ENCODE measurements at regions of chr6 and their contacts with region 1.

Region 1: DNA sequence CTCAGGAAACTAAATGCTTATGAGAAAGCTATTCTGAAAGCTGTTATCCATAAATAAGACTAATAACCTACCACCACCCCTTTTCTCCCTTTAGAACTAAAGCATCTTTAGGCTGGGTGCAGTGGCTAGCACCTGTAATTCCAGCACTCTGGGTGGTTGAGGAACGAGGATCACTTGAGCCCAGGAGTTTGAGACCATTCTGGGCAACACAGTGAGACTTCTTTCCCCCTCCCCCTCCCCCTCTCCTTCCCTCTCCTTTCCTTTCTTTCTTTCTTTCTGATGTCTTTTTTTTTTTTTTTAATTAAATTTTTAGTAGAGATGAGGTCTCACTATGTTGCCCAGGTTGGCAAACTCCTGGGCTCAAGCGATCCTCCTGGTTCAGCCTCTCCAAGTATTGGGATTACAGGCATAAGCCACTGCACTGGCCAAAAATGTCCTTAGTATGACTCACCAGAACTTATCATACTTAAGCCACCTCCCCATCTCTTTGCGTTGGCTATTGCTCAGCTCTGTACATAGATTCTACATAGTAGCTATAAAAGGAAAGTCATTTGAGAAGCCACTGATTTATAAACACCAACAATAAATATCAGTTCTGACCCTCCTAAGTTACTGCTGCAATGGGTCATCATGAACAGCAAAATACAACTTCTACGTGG is 54.8 kb upstream of the SPDEF start:
- DNase-seq: peak; percentile 48 to 82 (median 56)
- ATAC-seq: peak; percentile 84
- H3K4me3 ChIP-seq: no peak overlapping the region
- H3K27ac ChIP-seq: peak overlapping the region; percentile 43; the same call in 1 of the 3 replicates
- H3K4me1 ChIP-seq: peaks cover 6 to 37% of the 10 kb centered on the region in 2 experiments
- H3K27me3 ChIP-seq: no peaks in the 10 kb centered on the region
- CTCF ChIP-seq: no peak
- EP300 ChIP-seq: no peak; the same call in 1 of the 2 replicates
- POLR2A ChIP-seq: no peak
- RAD21 ChIP-seq: no peak

Region 2: GRCh38 chr6:34161857-34162515 is 449.0 kb before region 1 on chr6:
- CTCF ChIA-PET with region 1: interaction called, 6 read pairs
- POLR2A ChIA-PET with region 1: interaction called, 3 read pairs
- in situ Hi-C with region 1: loop called (anchors 5 kb)
- intact Hi-C with region 1: loop called (anchors 2 kb)
- DNase-seq: no peak
- ATAC-seq: no peak
- H3K4me3 ChIP-seq: no peak overlapping the region
- H3K27ac ChIP-seq: no peak overlapping the region
- H3K4me1 ChIP-seq: no peaks in the 10 kb centered on the region
- H3K27me3 ChIP-seq: peaks cover 8 to 20% of the 10 kb centered on the region in 2 experiments; a peak in 3 of 5 replicates
- CTCF ChIP-seq: no peak
- EP300 ChIP-seq: no peak
- POLR2A ChIP-seq: no peak
- RAD21 ChIP-seq: no peak

Region 3: DNA sequence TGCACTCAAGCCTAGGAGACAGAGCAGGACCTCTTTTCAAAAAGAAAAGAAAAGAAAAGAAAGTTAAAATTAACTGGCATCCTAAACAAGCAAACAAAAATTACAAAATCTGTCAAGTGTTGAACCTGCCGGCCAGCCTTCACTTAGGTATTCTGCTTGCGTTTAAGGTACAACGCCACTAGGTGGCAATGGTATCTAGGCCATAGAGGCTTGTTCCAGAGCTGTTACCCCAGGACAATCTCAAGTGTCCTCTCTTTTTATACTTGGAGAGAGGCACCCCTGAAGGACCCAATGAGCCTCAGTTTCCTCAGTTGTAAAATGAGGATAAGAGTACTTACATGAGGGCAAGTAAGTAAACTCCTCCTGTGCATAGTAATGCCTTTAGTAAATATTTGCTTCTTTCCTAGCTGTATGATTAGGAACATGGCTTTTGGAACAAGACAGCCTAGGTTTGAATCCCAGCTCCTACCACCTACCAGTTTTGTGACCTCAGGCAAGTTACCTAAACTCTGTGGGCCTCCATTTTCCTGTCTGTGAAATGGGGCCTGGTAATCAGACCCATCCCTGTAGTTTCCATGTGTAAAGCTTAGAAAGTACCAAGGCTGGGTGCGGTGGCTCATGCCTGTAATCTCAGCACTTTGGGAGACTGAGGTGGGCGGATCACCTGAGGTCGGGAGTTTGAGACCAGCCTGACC is 150.9 kb before region 1 on chr6:
- CTCF ChIA-PET with region 1: interaction called, 38 read pairs
- POLR2A ChIA-PET with region 1: interaction called, 9 read pairs
- in situ Hi-C with region 1: no loop called
- intact Hi-C with region 1: loop called (anchors 1 kb)
- DNase-seq: peak; percentile 74 to 82 (median 76)
- ATAC-seq: peak; percentile 79
- H3K4me3 ChIP-seq: no peak overlapping the region
- H3K27ac ChIP-seq: no peak overlapping the region
- H3K4me1 ChIP-seq: peaks cover 10 to 16% of the 10 kb centered on the region in 2 experiments; a peak in 4 of 5 replicates
- H3K27me3 ChIP-seq: no peaks in the 10 kb centered on the region
- CTCF ChIP-seq: peak; percentile 85 to 94 (median 85)
- EP300 ChIP-seq: no peak
- POLR2A ChIP-seq: no peak
- RAD21 ChIP-seq: peak; percentile 94 to 97

Region 4: GRCh38 chr6:34526992-34527728 is 83.8 kb before region 1 on chr6:
- CTCF ChIA-PET with region 1: interaction called, 9 read pairs
- POLR2A ChIA-PET with region 1: interaction called, 3 read pairs
- in situ Hi-C with region 1: loop called (anchors 5 kb)
- intact Hi-C with region 1: loop called (anchors 1 kb)
- DNase-seq: peak; percentile 98 to 99 (median 99)
- ATAC-seq: peak; percentile 94
- H3K4me3 ChIP-seq: no peak overlapping the region
- H3K27ac ChIP-seq: peak overlapping the region; percentile 45
- H3K4me1 ChIP-seq: peaks cover 24 to 55% of the 10 kb centered on the region in 2 experiments
- H3K27me3 ChIP-seq: no peaks in the 10 kb centered on the region
- CTCF ChIP-seq: peak; percentile 70 to 92 (median 91)
- EP300 ChIP-seq: no peak
- POLR2A ChIP-seq: peak; percentile 53; the same call in 1 of the 2 replicates
- RAD21 ChIP-seq: peak; percentile 80 to 84

Region 5: DNA sequence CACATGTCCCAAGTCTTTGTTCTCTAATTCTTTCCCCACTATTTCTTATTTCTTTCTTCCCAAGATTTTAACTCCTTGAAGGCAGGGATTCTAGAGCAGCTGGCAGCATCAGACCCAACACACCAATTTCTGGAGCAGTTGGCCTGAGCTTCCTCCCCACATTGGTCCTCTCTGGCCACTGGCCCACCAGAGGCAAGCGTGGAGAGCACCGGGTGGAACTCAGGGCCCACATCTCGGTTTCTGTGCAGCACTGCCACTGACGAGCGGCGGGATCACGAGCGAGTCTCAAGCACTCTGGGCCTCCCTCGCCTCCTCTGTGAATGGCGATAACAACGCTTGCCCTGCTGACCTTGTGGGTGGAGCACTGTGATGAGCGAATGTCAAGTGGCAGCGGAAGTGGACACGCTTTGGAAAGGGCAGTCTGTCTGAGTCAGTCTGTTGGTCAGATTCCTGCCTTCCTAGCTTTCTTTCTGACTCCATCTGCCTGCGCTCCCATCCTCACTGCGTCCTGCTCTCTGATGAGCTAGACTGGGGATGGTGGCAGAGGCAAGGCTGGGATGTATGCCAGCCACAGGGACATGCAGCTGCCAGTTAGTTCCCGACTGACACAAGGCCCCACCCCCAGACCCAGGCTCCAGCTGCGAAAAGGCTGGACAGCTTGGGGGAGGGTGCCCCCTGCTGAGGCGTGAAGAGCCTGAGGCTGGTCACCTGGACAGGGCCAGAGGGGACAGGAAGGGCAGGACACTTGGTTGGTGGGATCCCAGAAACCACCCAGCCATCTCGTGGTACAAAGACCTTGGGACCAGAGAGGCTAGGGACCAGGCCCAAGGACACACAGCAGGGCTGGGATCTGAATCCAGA is 50.4 kb before region 1 on chr6:
- CTCF ChIA-PET with region 1: no interaction called
- POLR2A ChIA-PET with region 1: no interaction called
- in situ Hi-C with region 1: no loop called
- intact Hi-C with region 1: loop called (anchors 1 kb)
- DNase-seq: peak; percentile 90 to 99 (median 92)
- ATAC-seq: peak; percentile 89
- H3K4me3 ChIP-seq: no peak overlapping the region
- H3K27ac ChIP-seq: peak overlapping the region; percentile 72
- H3K4me1 ChIP-seq: peaks cover 57 to 80% of the 10 kb centered on the region in 2 experiments
- H3K27me3 ChIP-seq: no peaks in the 10 kb centered on the region
- CTCF ChIP-seq: peak; percentile 60 to 66 (median 63)
- EP300 ChIP-seq: peak; percentile 91
- POLR2A ChIP-seq: peak; percentile 67
- RAD21 ChIP-seq: peak; percentile 56 to 78

Region 6: DNA sequence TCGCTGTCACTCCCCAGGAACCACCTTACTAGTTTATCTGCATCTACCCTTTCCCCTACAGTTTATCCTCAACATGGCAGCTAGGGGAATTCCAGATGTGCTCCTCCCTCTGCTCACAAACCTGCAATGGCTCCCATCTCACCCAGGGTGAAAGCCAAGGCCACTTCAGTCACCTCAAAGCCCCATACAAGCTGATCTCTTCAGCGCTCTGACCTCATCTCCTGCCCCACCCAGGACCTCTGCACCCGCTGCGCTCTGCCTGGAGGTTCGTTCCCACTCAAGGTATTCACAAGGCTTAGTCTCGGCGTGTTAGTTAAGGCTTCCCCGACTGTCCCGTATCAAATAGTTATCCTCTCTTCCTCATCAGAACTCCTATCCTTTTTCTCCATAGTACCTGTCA is 26.3 kb before region 1 on chr6:
- CTCF ChIA-PET with region 1: no interaction called
- POLR2A ChIA-PET with region 1: interaction called, 13 read pairs
- in situ Hi-C with region 1: no loop called
- intact Hi-C with region 1: no loop called
- DNase-seq: no peak
- ATAC-seq: peak; percentile 24
- H3K4me3 ChIP-seq: no peak overlapping the region
- H3K27ac ChIP-seq: no peak overlapping the region
- H3K4me1 ChIP-seq: peaks cover 0 to 4% of the 10 kb centered on the region in 2 experiments; a peak in 2 of 5 replicates
- H3K27me3 ChIP-seq: no peaks in the 10 kb centered on the region; a peak in 1 of 5 replicates
- CTCF ChIP-seq: no peak
- EP300 ChIP-seq: no peak
- POLR2A ChIP-seq: no peak
- RAD21 ChIP-seq: no peak

Region 7: GRCh38 chr6:34696739-34697543 is 86.0 kb after region 1 on chr6 and contains the start of gene ILRUN:
- CTCF ChIA-PET with region 1: no interaction called
- POLR2A ChIA-PET with region 1: no interaction called
- in situ Hi-C with region 1: no loop called
- intact Hi-C with region 1: loop called (anchors 2 kb)
- DNase-seq: peak; percentile 96 to 100 (median 98)
- ATAC-seq: peak; percentile 89
- H3K4me3 ChIP-seq: peak within 1 kb of the TSS; percentile 98
- H3K27ac ChIP-seq: peak within 1 kb of the TSS; percentile 89
- H3K4me1 ChIP-seq: peaks cover 17 to 22% of the 10 kb centered on the region in 2 experiments; a peak in 4 of 5 replicates
- H3K27me3 ChIP-seq: no peaks in the 10 kb centered on the region
- CTCF ChIP-seq: no peak
- EP300 ChIP-seq: no peak
- POLR2A ChIP-seq: peak; percentile 84
- RAD21 ChIP-seq: peak; percentile 7 to 14; a peak in 2 of 4 replicates
- polyA plus RNA-seq, gene ILRUN: 24.9 to 30.7 TPM

Measured in K562 (cell line).